Aorta (tissue), 5 donors: ENCODE measurements at regions of chr7 and their contacts with region 1.

Region 1: GRCh38 chr7:47254081-47255006 is 327.6 kb downstream of the TNS3 start:
- DNase-seq: peak; percentile 85 to 94
- ATAC-seq: peak; percentile 94
- H3K4me3 ChIP-seq: peak overlapping the region; percentile 27 to 59
- H3K27ac ChIP-seq: no peak overlapping the region
- H3K4me1 ChIP-seq: no peaks in the 10 kb centered on the region
- H3K27me3 ChIP-seq: no peaks in the 10 kb centered on the region

Region 2: GRCh38 chr7:45897042-45897690 is 1357.2 kb before region 1 on chr7:
- intact Hi-C with region 1: loop called in 1 of 2 experiments (anchors 2 kb)
- DNase-seq: no peak
- ATAC-seq: no peak
- H3K4me3 ChIP-seq: no peak overlapping the region
- H3K27ac ChIP-seq: no peak overlapping the region
- H3K4me1 ChIP-seq: no peaks in the 10 kb centered on the region
- H3K27me3 ChIP-seq: no peaks in the 10 kb centered on the region

Region 3: DNA sequence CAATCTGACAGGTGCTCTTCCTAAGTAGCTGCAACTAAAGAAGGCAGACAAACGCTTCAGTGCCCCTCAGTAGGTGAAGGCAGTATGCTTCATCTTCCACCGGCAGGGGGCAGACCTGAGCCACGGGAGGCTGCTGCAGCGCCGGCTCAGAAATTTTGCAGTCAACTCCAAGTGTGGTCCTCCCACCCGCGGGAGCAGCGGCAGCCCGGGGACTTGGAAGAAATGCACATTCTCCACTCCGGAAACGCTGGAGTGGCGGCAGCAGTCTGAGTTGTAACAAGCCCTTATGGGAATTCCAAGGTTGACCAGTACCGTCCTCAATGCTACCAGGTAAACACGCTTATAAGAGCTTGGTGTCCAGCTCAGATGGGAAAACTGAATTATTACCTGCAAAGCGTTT is 1336.7 kb before region 1 on chr7:
- intact Hi-C with region 1: loop called (anchors 5 kb)
- DNase-seq: peak; percentile 85 to 96
- ATAC-seq: peak; percentile 68
- H3K4me3 ChIP-seq: no peak overlapping the region
- H3K27ac ChIP-seq: no peak overlapping the region
- H3K4me1 ChIP-seq: no peaks in the 10 kb centered on the region
- H3K27me3 ChIP-seq: no peaks in the 10 kb centered on the region

Region 4: DNA sequence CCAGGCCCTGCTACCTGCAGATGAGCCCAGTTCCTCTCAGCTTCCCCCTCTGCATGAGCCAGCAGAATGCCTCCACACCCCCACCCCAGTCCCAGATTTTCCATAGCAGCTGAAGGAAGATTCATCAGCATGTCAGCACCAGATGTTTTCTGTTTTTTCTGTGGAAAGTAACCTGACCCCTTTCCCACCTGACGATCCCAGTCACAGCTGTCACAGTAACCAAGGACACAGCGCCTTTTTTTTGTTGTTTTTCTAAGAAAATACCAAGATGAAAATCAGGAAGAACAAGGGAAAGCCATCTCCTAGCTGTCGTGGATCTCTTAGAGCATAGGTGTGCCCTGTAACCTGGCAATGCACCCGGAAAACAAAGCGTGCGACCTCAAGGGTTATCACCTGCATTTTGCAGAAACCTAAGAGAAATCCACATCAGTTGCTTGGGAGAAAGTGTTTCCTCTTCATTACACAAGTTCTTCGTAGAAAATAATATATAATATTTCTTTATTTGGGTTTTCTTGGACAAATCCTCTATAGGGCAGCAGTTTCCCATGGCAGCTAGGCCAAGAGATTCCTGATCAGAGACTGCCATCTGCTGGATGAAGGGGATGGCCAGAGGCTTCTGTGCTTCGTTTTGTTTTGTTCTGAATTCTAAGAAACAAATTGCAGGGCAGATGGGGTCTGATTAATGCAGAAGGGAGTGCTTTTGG is 74.4 kb before region 1 on chr7:
- intact Hi-C with region 1: loop called in 1 of 2 experiments (anchors 5 kb)
- DNase-seq: no peak
- ATAC-seq: peak; percentile 76
- H3K4me3 ChIP-seq: no peak overlapping the region
- H3K27ac ChIP-seq: no peak overlapping the region
- H3K4me1 ChIP-seq: peaks cover 0 to 6% of the 10 kb centered on the region in 2 donors
- H3K27me3 ChIP-seq: no peaks in the 10 kb centered on the region